Endothelial cell of umbilical vein (primary cell): ENCODE measurements at regions of chr11 and their contacts with region 1.

Region 1: DNA sequence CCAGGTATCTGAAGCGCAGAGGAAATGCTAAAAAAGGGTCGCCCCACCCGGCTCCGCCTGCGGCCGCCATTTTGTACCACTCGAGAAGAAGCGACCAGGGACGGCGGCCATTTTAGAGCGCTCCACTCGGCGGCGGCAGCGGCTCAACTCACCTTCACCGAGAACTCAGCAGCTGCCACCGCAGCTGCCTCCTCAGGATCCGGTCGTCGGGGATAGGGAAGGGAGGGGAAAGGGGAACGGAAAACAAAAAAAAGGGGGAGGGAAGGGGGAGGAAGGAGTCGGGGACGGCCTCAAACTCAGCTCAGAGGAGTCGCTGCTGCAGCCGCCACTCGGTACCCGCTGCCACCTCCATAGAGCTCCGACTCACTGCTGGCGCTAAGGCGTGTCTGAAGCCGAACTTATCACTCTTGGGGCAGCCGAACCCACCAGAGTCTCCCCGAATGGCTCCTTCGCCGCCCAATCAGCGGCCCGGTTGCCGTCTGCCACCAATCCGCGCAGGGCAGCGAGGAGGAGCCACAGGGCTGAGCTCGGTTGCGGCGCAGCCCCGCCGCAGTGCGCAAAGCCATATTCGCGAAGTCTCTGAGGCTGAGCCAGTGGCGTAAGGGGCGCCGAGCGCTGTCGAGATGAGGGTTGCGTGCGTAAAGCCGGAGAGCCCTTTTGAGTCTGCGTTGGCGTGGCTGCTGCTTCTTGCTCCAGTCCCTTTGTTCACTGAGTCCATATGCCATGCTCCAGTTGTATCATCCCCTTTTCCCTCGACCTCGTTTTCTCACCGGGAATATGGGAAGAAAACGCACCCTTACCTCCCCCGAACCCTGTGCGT is at the start of gene EIF4G2:
- DNase-seq: peak; percentile 99
- H3K4me3 ChIP-seq: peak within 1 kb of the TSS; percentile 88 to 97 (median 97)
- H3K27ac ChIP-seq: peak within 1 kb of the TSS; percentile 97
- H3K4me1 ChIP-seq: peaks cover 39% of the 10 kb centered on the region
- H3K27me3 ChIP-seq: no peaks in the 10 kb centered on the region
- CTCF ChIP-seq: no peak
- POLR2A ChIP-seq: peak; percentile 100
- total RNA-seq, gene EIF4G2: 1,175 and 1,194 TPM in 2 replicates

Region 2: DNA sequence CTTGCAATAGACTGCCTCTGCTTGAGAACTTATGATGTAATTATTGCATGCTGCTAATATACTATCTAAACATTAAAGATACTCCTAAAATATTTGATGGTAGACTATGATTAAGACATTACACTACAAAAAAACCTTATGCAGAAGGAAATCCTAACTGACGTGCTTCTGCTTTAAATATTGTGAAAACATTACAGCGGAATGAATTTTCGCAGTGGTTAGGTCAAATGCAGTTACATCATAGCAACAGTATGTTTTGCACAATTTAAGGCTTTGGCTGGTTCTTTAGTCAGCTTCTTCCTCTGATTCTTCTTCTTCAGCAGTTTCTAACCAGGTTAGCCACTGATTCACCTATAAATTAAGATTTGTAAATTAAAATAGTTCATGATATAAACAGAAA is 11.2 kb before region 1 on chr11:
- CTCF ChIA-PET with region 1: interaction called, 17 read pairs
- POLR2A ChIA-PET with region 1: interaction called, 47 read pairs
- dilution Hi-C with region 1: no loop called
- intact Hi-C with region 1: no loop called
- DNase-seq: no peak
- H3K4me3 ChIP-seq: no peak overlapping the region
- H3K27ac ChIP-seq: no peak overlapping the region
- H3K4me1 ChIP-seq: no peaks in the 10 kb centered on the region
- H3K27me3 ChIP-seq: no peaks in the 10 kb centered on the region
- CTCF ChIP-seq: no peak
- POLR2A ChIP-seq: no peak

Region 3: GRCh38 chr11:10899121-10899830 is 90.5 kb after region 1 on chr11:
- CTCF ChIA-PET with region 1: interaction called, 6 read pairs
- POLR2A ChIA-PET with region 1: interaction called, 39 read pairs
- dilution Hi-C with region 1: no loop called
- intact Hi-C with region 1: loop called (anchors 1 kb)
- DNase-seq: no peak
- H3K4me3 ChIP-seq: no peak overlapping the region
- H3K27ac ChIP-seq: peak overlapping the region; percentile 95
- H3K4me1 ChIP-seq: peaks cover 25% of the 10 kb centered on the region
- H3K27me3 ChIP-seq: no peaks in the 10 kb centered on the region
- CTCF ChIP-seq: no peak
- POLR2A ChIP-seq: no peak

Region 4: GRCh38 chr11:10911907-10912306 is 103.1 kb after region 1 on chr11:
- CTCF ChIA-PET with region 1: interaction called, 12 read pairs
- POLR2A ChIA-PET with region 1: interaction called, 13 read pairs
- dilution Hi-C with region 1: no loop called
- intact Hi-C with region 1: loop called (anchors 1 kb)
- DNase-seq: peak; percentile 34
- H3K4me3 ChIP-seq: no peak overlapping the region
- H3K27ac ChIP-seq: no peak overlapping the region
- H3K4me1 ChIP-seq: peaks cover 17% of the 10 kb centered on the region
- H3K27me3 ChIP-seq: no peaks in the 10 kb centered on the region
- CTCF ChIP-seq: no peak
- POLR2A ChIP-seq: no peak

Region 5: DNA sequence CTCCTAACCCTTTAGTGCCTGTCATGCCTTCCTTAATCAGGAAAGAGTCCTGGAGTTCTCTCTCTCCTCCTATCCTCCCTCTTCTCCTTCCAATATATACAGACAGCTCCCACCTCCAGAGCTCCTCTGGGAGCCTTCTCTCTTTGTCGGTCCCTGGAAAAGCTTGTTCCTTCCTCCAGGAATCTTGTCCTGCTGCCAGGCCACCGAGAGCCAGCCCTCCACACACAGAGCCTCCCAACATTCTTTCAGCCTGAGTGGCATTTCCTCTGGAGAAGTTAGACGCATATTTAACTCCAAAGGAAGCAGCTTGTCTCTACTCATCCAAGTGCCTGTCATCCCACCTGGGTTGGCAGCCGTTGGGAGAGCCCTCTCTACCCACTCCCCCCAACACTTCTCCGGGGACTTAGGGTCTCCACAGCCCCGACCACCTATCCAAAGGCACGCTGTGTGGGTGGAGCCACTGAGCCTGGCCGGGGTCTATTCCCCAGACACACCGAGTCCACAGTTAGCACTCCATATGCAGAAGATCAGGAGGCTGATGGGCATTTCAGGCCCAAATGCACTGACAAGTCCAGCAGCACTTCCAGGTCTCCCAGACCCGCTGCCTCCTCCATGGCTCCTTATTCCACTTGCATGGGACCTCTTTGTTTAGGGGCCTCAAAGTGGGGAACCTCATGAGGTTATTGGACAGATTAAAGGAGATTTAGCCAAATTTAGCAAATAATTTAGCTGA is 1168.6 kb after region 1 on chr11:
- CTCF ChIA-PET with region 1: interaction called, 4 read pairs
- POLR2A ChIA-PET with region 1: interaction called, 7 read pairs
- dilution Hi-C with region 1: no loop called
- intact Hi-C with region 1: loop called (anchors 5 kb)
- DNase-seq: peak; percentile 95
- H3K4me3 ChIP-seq: no peak overlapping the region
- H3K27ac ChIP-seq: peak overlapping the region; percentile 95
- H3K4me1 ChIP-seq: peaks cover 55% of the 10 kb centered on the region
- H3K27me3 ChIP-seq: no peaks in the 10 kb centered on the region
- CTCF ChIP-seq: no peak
- POLR2A ChIP-seq: peak; percentile 51